AG04450 (cell line): ENCODE measurements at regions of chr7 and their contacts with region 1.

Region 1: DNA sequence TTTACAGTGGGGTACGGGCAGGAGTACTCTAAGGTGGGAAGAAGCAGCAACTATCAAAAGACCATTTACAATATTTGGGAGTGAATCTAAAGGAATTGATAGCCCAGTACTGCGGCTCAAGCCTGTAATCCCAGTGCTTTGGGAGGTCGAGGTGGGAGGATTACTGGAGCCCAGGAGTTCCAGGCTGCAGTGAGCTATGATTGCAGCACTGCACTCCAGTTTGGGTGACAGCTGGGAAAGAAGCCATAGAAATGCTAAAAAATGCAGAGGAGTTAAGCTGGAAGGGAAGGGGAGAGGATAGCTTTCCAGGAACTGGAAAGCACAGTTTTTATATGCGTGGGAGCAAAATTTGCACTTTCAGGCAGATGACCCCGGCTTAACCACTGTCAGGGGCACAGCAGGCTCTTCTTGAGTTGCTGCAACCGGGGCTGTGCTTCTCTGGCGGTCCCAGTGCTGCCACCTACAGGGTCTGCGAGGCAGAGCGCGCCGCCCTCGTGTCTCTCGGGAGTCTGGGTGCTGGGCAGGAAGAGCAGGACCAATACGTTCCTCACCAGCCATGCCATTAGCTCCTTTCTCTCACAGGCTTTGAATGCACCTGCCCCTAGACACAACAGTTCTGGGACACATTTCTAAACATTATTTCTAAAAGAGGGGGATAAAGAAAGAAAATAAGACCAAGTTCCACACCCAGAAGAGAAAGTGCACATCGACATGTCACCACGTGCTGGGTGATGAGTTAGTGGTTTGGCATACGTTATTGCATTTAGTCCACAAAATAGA is 10.1 kb upstream of the BMPER start:
- DNase-seq: no peak
- H3K4me3 ChIP-seq: no peak overlapping the region
- H3K27ac ChIP-seq: no peak overlapping the region
- H3K27me3 ChIP-seq: peaks cover 12% of the 10 kb centered on the region
- CTCF ChIP-seq: peak; percentile 96

Region 2: DNA sequence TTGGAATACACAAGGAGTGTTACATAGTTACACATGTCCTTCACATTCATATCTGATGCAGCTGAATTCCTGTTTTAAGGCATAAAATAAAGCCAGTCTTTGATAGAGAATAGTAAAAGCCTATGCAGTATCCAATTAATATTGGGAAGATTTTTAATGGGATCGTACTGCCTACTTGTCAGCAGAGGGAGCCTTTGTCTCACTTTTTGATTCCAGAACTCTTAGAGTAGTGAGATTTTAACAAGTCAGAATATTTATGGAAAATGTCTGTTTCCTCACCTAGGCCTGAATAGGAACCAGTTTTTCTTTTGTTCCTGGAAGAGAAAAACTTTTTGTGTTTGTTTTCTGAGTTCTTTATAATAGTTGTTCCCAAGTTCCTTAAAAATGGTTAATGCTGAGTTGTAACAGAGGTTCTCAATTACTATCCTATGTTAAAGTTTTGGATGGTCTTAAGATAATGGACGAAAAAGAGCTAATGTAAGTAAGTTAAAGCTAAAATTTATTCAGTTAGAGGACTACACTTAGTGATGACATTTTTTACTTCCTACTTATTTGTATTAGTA is 651.8 kb before region 1 on chr7:
- CTCF ChIA-PET with region 1: interaction called, 21 read pairs
- POLR2A ChIA-PET with region 1: no interaction called
- DNase-seq: peak; percentile 27
- H3K4me3 ChIP-seq: no peak overlapping the region
- H3K27ac ChIP-seq: no peak overlapping the region
- H3K27me3 ChIP-seq: no peaks in the 10 kb centered on the region
- CTCF ChIP-seq: peak; percentile 77

Region 3: GRCh38 chr7:33423646-33424020 is 471.6 kb before region 1 on chr7:
- CTCF ChIA-PET with region 1: interaction called, 13 read pairs
- POLR2A ChIA-PET with region 1: no interaction called
- DNase-seq: no peak
- H3K4me3 ChIP-seq: no peak overlapping the region
- H3K27ac ChIP-seq: no peak overlapping the region
- H3K27me3 ChIP-seq: no peaks in the 10 kb centered on the region
- CTCF ChIP-seq: peak; percentile 27

Region 4: GRCh38 chr7:33459340-33459751 is 435.9 kb before region 1 on chr7:
- CTCF ChIA-PET with region 1: interaction called, 11 read pairs
- POLR2A ChIA-PET with region 1: no interaction called
- DNase-seq: peak; percentile 3
- H3K4me3 ChIP-seq: no peak overlapping the region
- H3K27ac ChIP-seq: no peak overlapping the region
- H3K27me3 ChIP-seq: no peaks in the 10 kb centered on the region
- CTCF ChIP-seq: peak; percentile 57

Region 5: DNA sequence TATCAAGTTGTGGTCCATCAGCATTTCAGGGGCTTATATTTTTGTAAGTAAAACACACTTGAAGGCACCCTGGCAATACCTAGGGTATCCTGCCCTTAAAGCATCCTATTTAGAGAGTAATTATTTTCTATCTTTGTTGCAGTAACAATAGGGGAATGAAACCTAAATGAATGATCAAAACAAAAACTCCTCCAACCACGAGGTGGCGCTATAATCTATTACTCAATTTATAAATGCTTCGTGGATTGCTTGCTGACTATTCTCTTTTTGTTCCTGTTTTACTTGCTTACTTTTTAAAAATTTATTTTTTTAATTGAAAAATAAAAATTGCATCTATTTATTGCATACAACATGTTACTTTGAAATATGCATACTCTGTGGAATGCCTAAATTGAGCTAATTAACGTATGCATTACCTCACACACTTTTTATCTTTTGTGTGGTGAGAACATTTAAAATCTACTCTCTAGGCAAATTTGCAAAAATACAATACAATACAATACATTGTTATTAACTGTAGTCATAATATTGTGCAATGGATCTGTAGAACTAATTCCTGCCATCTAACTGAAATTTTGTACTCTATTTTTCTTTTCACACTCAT is 137.6 kb before region 1 on chr7:
- CTCF ChIA-PET with region 1: interaction called, 23 read pairs
- POLR2A ChIA-PET with region 1: no interaction called
- DNase-seq: no peak
- H3K4me3 ChIP-seq: no peak overlapping the region
- H3K27ac ChIP-seq: no peak overlapping the region
- H3K27me3 ChIP-seq: no peaks in the 10 kb centered on the region
- CTCF ChIP-seq: peak; percentile 55

Region 6: GRCh38 chr7:33880787-33881186 is 14.4 kb before region 1 on chr7:
- CTCF ChIA-PET with region 1: interaction called, 42 read pairs
- POLR2A ChIA-PET with region 1: no interaction called
- DNase-seq: no peak
- H3K4me3 ChIP-seq: no peak overlapping the region
- H3K27ac ChIP-seq: no peak overlapping the region
- H3K27me3 ChIP-seq: no peaks in the 10 kb centered on the region
- CTCF ChIP-seq: no peak

Region 7: DNA sequence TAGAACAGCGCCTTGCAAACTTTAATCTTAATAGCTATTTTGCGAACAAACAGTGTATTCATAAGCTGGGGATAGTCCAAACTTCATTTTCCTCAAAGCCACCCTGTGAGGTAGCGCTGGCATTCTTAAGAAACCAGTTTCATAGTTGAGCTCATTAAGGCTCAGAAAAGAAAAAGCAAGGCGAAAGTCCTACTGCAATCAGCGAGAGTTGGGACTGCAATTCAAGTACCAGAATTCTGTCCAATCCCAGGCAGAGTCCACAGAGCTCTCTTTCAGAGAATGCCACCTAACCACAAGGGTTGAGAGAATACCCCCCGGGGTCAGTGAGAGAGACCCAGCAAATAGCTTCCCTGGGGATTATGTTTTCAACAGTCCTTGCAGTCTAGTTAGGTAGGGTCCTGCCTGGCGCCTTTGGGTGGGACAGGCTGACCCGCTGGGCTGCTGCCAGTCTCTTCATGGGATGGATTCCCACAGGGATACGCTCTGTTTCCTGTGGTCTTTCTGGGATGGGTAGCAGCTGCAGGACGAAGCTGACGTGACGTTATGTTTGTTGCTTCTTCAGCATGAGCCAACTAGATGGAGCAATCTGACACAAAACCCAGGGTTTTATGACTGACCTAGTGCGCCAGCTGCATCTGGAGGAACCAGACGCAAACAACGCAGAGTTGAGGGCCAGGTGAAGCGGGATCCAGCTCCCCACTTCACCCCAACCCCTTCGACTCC is 26.2 kb after region 1 on chr7:
- CTCF ChIA-PET with region 1: interaction called, 17 read pairs
- POLR2A ChIA-PET with region 1: no interaction called
- DNase-seq: peak; percentile 30
- H3K4me3 ChIP-seq: no peak overlapping the region
- H3K27ac ChIP-seq: no peak overlapping the region
- H3K27me3 ChIP-seq: peaks cover 4% of the 10 kb centered on the region
- CTCF ChIP-seq: no peak